ENCODE measurements at regions of chr16 and their contacts with region 1.

Region 1: GRCh38 chr16:24036614-24037013 is 200.8 kb downstream of the PRKCB start:
- DNase-seq: peak; percentile 43
- ATAC-seq: peak; percentile 82
- H3K4me3 ChIP-seq: no peak overlapping the region
- H3K27ac ChIP-seq: no peak overlapping the region
- H3K4me1 ChIP-seq: no peaks in the 10 kb centered on the region; the same call in 1 of the 2 replicates
- H3K27me3 ChIP-seq: peaks cover 4% of the 10 kb centered on the region; the same call in 1 of the 2 replicates
- CTCF ChIP-seq: peak; percentile 85

Region 2: DNA sequence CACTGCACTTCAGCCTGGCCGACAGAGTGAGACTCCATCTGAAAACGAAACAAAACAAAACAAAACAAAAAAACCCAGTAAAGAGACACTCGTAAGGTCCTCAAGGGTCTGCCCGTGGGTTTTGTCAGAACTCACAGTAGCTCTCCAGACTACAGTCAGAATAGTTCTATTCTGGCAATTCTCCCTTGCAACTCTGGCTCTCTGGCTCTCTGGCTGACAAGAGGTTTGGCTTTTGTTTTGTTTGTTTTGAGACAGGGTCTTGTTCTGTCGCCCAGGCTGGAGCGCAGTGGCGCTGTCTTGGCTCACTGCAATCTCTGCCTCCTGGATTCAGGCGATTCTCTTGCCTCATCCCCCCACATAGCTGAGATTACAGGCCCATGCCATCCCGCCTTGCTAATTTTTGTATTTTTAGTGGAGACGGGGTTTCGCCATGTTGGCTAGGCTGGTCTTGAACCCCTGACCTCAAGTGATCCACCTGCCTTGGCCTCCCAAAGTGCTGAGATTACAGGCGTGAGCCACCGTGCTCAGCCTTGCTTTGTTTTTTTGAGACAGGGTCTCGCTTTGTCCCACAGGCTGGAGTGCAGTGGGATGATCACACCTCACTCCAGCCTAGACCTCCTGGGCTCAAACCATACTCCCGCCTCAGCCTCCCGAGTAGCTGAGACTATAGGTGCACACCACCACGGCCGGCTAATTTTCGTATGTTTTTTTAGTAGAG is 302.3 kb before region 1 on chr16:
- CTCF ChIA-PET with region 1: no interaction called
- POLR2A ChIA-PET with region 1: no interaction called
- in situ Hi-C with region 1: no loop called
- intact Hi-C with region 1: loop called (anchors 2 kb)
- DNase-seq: no peak
- ATAC-seq: peak; percentile 32; the same call in 1 of the 2 replicates
- H3K4me3 ChIP-seq: no peak overlapping the region
- H3K27ac ChIP-seq: no peak overlapping the region
- H3K4me1 ChIP-seq: no peaks in the 10 kb centered on the region
- H3K27me3 ChIP-seq: no peaks in the 10 kb centered on the region; the same call in 1 of the 2 replicates
- CTCF ChIP-seq: no peak

Region 3: GRCh38 chr16:23801378-23801777 is 235.2 kb before region 1 on chr16:
- CTCF ChIA-PET with region 1: interaction called, 4 read pairs
- POLR2A ChIA-PET with region 1: no interaction called
- in situ Hi-C with region 1: no loop called
- intact Hi-C with region 1: loop called (anchors 1 kb)
- DNase-seq: peak; percentile 43
- ATAC-seq: peak; percentile 94
- H3K4me3 ChIP-seq: no peak overlapping the region
- H3K27ac ChIP-seq: no peak overlapping the region
- H3K4me1 ChIP-seq: no peaks in the 10 kb centered on the region
- H3K27me3 ChIP-seq: peaks cover 5% of the 10 kb centered on the region; the same call in 1 of the 2 replicates
- CTCF ChIP-seq: peak; percentile 80

Region 4: GRCh38 chr16:24010440-24011089 is 26.0 kb before region 1 on chr16:
- CTCF ChIA-PET with region 1: no interaction called
- POLR2A ChIA-PET with region 1: no interaction called
- in situ Hi-C with region 1: no loop called
- intact Hi-C with region 1: no loop called
- DNase-seq: peak; percentile 39
- ATAC-seq: peak; percentile 93
- H3K4me3 ChIP-seq: no peak overlapping the region
- H3K27ac ChIP-seq: no peak overlapping the region
- H3K4me1 ChIP-seq: no peaks in the 10 kb centered on the region
- H3K27me3 ChIP-seq: 0 out of 2 replicates have a peak, but pooled peaks cover 2% of the 10 kb centered on the region
- CTCF ChIP-seq: peak; percentile 88

Measured in Panc1 (cell line).